ENCODE measurements at regions of chr1 and their contacts with region 1.

Region 1: GRCh38 chr1:114282751-114283403 is 129.2 kb upstream of the SYT6 start:
- DNase-seq: peak; percentile 49
- H3K4me3 ChIP-seq: no peak overlapping the region
- CTCF ChIP-seq: peak; percentile 94

Region 2: GRCh38 chr1:114263343-114263742 is 19.5 kb before region 1 on chr1:
- CTCF ChIA-PET with region 1: interaction called, 28 read pairs
- POLR2A ChIA-PET with region 1: no interaction called
- DNase-seq: no peak
- H3K4me3 ChIP-seq: no peak overlapping the region
- CTCF ChIP-seq: no peak

Region 3: DNA sequence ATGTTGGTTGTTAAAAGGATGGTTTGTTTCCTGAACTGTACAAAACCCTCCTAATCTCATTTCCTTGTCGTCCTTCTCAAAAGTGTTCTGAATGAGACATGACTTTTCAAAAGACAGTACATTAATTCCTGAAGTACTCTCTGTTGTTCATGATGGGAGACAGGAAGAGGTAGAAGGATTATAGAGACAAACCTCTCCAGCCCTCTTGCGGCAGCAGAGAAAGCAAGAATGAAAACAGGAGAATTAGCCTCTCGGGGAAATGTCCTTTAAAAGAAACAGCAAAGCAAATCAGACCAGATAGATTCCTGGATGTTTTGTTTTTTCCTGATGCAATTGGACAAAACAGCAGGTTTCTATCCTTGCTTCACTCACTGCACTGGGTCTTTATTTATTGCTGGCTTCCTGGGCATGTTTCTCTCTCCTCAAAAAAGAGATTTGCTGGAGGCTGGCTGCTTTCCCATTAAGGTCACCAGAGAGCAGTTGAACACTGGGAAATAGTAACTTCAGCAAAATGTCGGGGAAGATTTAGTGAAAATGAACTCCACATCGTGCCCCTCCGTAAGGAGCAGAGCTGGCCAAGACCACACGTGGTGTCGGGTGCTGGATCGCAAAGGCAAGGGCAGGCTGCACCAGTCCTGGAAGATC is 16.6 kb after region 1 on chr1:
- CTCF ChIA-PET with region 1: interaction called, 61 read pairs
- POLR2A ChIA-PET with region 1: no interaction called
- DNase-seq: no peak
- H3K4me3 ChIP-seq: no peak overlapping the region
- CTCF ChIP-seq: no peak

Measured in AG04449 (cell line).